Naive thymus-derived CD4-positive, alpha-beta T cell (primary cell): ENCODE measurements at regions of chr2 and their contacts with region 1.

Region 1: GRCh38 chr2:8681786-8682692 is at the start of gene ID2:
- DNase-seq: peak; percentile 96 to 99 (median 99)
- ATAC-seq: peak; percentile 83
- H3K4me3 ChIP-seq: peak within 1 kb of the TSS; percentile 89
- H3K4me3 Mint-ChIP-seq: peak within 1 kb of the TSS; percentile 89 to 100 (median 98)
- H3K27ac ChIP-seq: peak within 1 kb of the TSS; percentile 81
- H3K27ac Mint-ChIP-seq: peak within 1 kb of the TSS; percentile 89 to 97 (median 95)
- H3K4me1 ChIP-seq: peaks cover 10 to 24% of the 10 kb centered on the region in 2 donors
- H3K4me1 Mint-ChIP-seq: peaks cover 24 to 49% (median 43%) of the 10 kb centered on the region in 7 donors
- H3K27me3 ChIP-seq: peaks cover 0 to 18% of the 10 kb centered on the region in 2 donors
- H3K27me3 Mint-ChIP-seq: peaks cover 12 to 24% (median 20%) of the 10 kb centered on the region in 5 donors
- total RNA-seq, gene ID2: 43.0 to 185 (median 77.1) TPM

Region 2: DNA sequence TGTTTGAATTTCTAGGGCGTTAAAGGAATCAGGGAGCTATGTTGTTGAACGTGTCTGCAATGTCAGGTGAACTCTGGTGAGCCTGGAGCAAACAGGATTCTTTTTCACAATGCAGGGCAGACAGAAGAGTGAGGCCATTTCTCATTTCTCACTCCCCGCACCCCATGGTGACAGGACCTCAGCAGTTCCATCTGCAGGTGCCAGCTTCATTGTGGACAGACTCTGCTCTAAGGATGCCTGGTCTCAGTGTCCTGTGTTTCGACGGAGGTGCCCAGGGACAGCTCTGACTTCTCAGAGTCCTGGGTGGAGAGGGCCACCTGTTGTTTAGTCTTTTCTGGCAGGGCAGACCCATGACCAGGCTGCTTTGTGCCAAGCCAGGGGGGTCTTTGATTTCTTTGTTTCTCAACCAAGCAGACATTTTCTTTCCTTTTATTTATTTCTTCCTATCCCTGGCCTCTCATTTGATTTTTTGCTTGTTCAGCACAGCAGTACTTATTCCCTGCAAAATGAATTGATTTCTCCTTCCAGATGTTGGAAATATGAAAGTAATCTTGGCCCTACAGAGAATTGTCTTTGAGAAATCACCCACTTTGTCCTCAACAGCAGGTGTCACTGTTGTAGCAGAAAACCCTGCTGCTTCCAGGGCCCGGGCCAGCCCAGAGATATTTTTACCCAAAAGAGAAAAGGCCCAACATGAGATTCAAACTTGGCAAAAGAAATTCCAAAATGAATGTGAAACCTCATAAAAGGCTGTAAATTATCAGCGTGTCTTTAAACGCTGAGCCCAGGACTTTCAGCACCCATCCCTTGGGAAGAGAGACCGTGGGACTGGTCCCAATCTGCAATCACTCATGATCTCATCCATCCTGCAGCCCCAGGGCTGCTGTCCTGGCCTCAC is 1563.2 kb before region 1 on chr2:
- CTCF ChIA-PET with region 1: no interaction called
- POLR2A ChIA-PET with region 1: no interaction called
- intact Hi-C with region 1: loop called in 1 of 2 experiments (anchors 2 kb)
- DNase-seq: peak in 2 of 9 donors; percentile 10 to 24
- ATAC-seq: no peak
- H3K4me3 ChIP-seq: no peak overlapping the region
- H3K4me3 Mint-ChIP-seq: no peak overlapping the region
- H3K27ac ChIP-seq: no peak overlapping the region
- H3K27ac Mint-ChIP-seq: no peak overlapping the region
- H3K4me1 ChIP-seq: no peaks in the 10 kb centered on the region
- H3K4me1 Mint-ChIP-seq: no peaks in the 10 kb centered on the region
- H3K27me3 ChIP-seq: no peaks in the 10 kb centered on the region
- H3K27me3 Mint-ChIP-seq: peaks cover 0 to 4% (median 0%) of the 10 kb centered on the region in 5 donors

Region 3: GRCh38 chr2:7567646-7568045 is 1114.4 kb before region 1 on chr2:
- CTCF ChIA-PET with region 1: interaction called, 16 read pairs
- POLR2A ChIA-PET with region 1: interaction called, 33 read pairs
- intact Hi-C with region 1: loop called (anchors 1 kb)
- DNase-seq: peak; percentile 16 to 92 (median 79)
- ATAC-seq: peak; percentile 92
- H3K4me3 ChIP-seq: peak overlapping the region; percentile 14
- H3K4me3 Mint-ChIP-seq: peak overlapping the region; percentile 48 to 79 (median 72)
- H3K27ac ChIP-seq: peak overlapping the region; percentile 61
- H3K27ac Mint-ChIP-seq: peak overlapping the region; percentile 89 to 99 (median 96)
- H3K4me1 ChIP-seq: peaks cover 17 to 45% of the 10 kb centered on the region in 2 donors
- H3K4me1 Mint-ChIP-seq: peaks cover 30 to 72% (median 66%) of the 10 kb centered on the region in 7 donors
- H3K27me3 ChIP-seq: no peaks in the 10 kb centered on the region
- H3K27me3 Mint-ChIP-seq: no peaks in the 10 kb centered on the region

Region 4: DNA sequence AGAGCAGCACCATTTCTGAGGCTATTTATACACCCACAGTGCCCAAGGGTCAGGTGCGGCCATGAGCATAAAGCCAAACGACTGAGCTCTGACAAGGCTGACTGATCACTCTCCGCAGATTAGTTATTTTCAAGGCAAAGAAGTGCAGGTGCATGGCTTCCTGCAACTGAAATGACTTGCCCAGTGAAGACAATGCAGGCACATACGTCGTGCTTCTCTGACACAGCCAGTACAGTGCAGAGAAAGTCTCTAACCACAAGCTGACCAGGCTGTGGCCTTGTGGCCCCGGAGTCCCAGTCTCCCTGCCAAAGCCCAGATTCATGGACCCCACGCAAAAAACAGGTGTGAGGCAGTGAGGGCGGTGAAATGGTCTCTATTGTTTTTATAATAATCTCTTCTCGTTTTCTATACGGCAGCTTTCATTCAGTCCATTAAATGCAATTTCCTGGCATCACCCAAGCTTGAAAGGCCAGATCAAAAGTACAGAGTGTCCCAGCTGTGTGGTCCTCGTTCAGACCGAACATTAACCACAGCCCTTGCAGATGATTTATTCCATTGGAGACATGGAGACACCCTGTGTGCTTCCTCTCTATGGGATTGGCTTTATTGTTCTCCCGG is 447.2 kb before region 1 on chr2:
- CTCF ChIA-PET with region 1: no interaction called
- POLR2A ChIA-PET with region 1: no interaction called
- intact Hi-C with region 1: loop called in 1 of 2 experiments (anchors 10 kb)
- DNase-seq: no peak
- ATAC-seq: no peak
- H3K4me3 ChIP-seq: no peak overlapping the region
- H3K4me3 Mint-ChIP-seq: peak overlapping the region in 5 of 10 donors; percentile 17 to 47 (median 29)
- H3K27ac ChIP-seq: no peak overlapping the region
- H3K27ac Mint-ChIP-seq: no peak overlapping the region
- H3K4me1 ChIP-seq: peaks cover 0 to 2% of the 10 kb centered on the region in 2 donors
- H3K4me1 Mint-ChIP-seq: peaks cover 2 to 36% (median 10%) of the 10 kb centered on the region in 7 donors
- H3K27me3 ChIP-seq: no peaks in the 10 kb centered on the region
- H3K27me3 Mint-ChIP-seq: peaks cover 4 to 24% (median 9%) of the 10 kb centered on the region in 5 donors

Region 5: DNA sequence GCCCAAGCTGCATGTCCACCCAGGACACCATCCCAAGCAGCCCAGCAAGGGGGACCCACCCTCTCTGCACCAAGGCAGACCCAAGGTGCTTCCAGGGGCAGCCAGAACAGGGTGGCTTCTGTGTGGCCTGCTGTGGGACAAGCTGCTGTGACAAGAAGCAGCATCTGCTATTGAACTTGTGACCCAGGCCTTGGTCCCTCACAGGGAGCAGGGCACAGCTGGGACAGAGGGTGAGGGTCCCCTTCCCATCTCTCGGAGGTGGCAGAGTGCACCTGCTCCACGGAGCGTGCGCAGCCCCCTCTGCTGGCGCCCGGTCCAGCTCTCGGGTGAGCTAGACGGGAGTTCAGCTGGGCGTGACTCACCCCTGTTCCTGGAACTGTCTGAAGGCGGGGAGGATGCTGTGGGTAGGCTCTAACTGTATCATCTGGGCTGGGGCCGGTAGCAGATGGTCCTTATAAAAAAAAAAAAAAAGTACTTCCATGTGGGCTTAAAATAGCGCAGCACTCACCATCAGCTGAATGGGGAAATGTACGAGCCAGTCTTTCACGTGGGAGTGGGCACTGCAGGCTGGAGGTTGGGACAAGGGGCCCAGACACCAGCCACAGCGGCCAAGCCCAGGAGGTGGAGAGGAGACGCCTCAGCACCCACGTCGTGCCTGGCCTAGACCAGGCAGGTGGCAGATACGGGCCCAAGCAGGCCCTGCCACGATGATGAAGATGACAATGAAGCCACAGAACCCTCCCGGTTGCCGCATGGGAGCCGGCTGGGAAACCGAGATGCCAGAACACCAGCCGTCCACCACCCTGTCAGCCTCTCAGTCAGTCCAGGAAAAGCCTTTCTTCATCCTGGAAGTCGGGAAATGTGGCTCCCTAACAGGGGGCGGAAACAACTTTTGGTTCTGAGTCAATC is 137.0 kb before region 1 on chr2:
- CTCF ChIA-PET with region 1: no interaction called
- POLR2A ChIA-PET with region 1: no interaction called
- intact Hi-C with region 1: loop called in 1 of 2 experiments (anchors 1 kb)
- DNase-seq: peak in 8 of 9 donors; percentile 10 to 85 (median 32)
- ATAC-seq: peak; percentile 82
- H3K4me3 ChIP-seq: peak overlapping the region; percentile 17
- H3K4me3 Mint-ChIP-seq: peak overlapping the region in 7 of 10 donors; percentile 2 to 64 (median 23)
- H3K27ac ChIP-seq: no peak overlapping the region
- H3K27ac Mint-ChIP-seq: peak overlapping the region in 4 of 9 donors; percentile 43 to 97 (median 60)
- H3K4me1 ChIP-seq: peaks cover 10 to 57% of the 10 kb centered on the region in 2 donors
- H3K4me1 Mint-ChIP-seq: peaks cover 32 to 84% (median 42%) of the 10 kb centered on the region in 7 donors
- H3K27me3 ChIP-seq: no peaks in the 10 kb centered on the region
- H3K27me3 Mint-ChIP-seq: no peaks in the 10 kb centered on the region

Region 6: GRCh38 chr2:8650256-8650655 is 31.8 kb before region 1 on chr2:
- CTCF ChIA-PET with region 1: no interaction called
- POLR2A ChIA-PET with region 1: no interaction called
- intact Hi-C with region 1: no loop called
- DNase-seq: no peak
- ATAC-seq: no peak
- H3K4me3 ChIP-seq: no peak overlapping the region
- H3K4me3 Mint-ChIP-seq: no peak overlapping the region
- H3K27ac ChIP-seq: no peak overlapping the region
- H3K27ac Mint-ChIP-seq: no peak overlapping the region
- H3K4me1 ChIP-seq: no peaks in the 10 kb centered on the region
- H3K4me1 Mint-ChIP-seq: no peaks in the 10 kb centered on the region
- H3K27me3 ChIP-seq: no peaks in the 10 kb centered on the region
- H3K27me3 Mint-ChIP-seq: peaks cover 0 to 4% (median 0%) of the 10 kb centered on the region in 5 donors

Region 7: GRCh38 chr2:8662239-8662895 is 19.7 kb before region 1 on chr2:
- CTCF ChIA-PET with region 1: interaction called, 3 read pairs
- POLR2A ChIA-PET with region 1: interaction called, 7 read pairs
- intact Hi-C with region 1: loop called in 1 of 2 experiments (anchors 1 kb)
- DNase-seq: no peak
- ATAC-seq: no peak
- H3K4me3 ChIP-seq: no peak overlapping the region
- H3K4me3 Mint-ChIP-seq: peak overlapping the region in 1 of 10 donors; percentile 7
- H3K27ac ChIP-seq: no peak overlapping the region
- H3K27ac Mint-ChIP-seq: peak overlapping the region in 1 of 9 donors; percentile 40
- H3K4me1 ChIP-seq: peaks cover 3 to 13% of the 10 kb centered on the region in 2 donors
- H3K4me1 Mint-ChIP-seq: peaks cover 3 to 37% (median 21%) of the 10 kb centered on the region in 7 donors
- H3K27me3 ChIP-seq: no peaks in the 10 kb centered on the region
- H3K27me3 Mint-ChIP-seq: peaks cover 0 to 39% (median 11%) of the 10 kb centered on the region in 5 donors

Region 8: GRCh38 chr2:8729939-8730338 is 47.9 kb after region 1 on chr2:
- CTCF ChIA-PET with region 1: no interaction called
- POLR2A ChIA-PET with region 1: no interaction called
- intact Hi-C with region 1: no loop called
- DNase-seq: no peak
- ATAC-seq: no peak
- H3K4me3 ChIP-seq: no peak overlapping the region
- H3K4me3 Mint-ChIP-seq: no peak overlapping the region
- H3K27ac ChIP-seq: no peak overlapping the region
- H3K27ac Mint-ChIP-seq: peak overlapping the region in 1 of 9 donors; percentile 4
- H3K4me1 ChIP-seq: no peaks in the 10 kb centered on the region
- H3K4me1 Mint-ChIP-seq: no peaks in the 10 kb centered on the region
- H3K27me3 ChIP-seq: no peaks in the 10 kb centered on the region
- H3K27me3 Mint-ChIP-seq: no peaks in the 10 kb centered on the region

Region 9: GRCh38 chr2:10448208-10448645 is 1766.2 kb after region 1 on chr2 and contains the start of gene ODC1:
- CTCF ChIA-PET with region 1: no interaction called
- POLR2A ChIA-PET with region 1: no interaction called
- intact Hi-C with region 1: loop called in 1 of 2 experiments (anchors 5 kb)
- DNase-seq: peak; percentile 96 to 99 (median 97)
- ATAC-seq: peak; percentile 92
- H3K4me3 ChIP-seq: peak within 1 kb of the TSS; percentile 91
- H3K4me3 Mint-ChIP-seq: peak within 1 kb of the TSS; percentile 81 to 95 (median 86)
- H3K27ac ChIP-seq: peak within 1 kb of the TSS; percentile 88
- H3K27ac Mint-ChIP-seq: peak within 1 kb of the TSS; percentile 76 to 94 (median 89)
- H3K4me1 ChIP-seq: peaks cover 12 to 26% of the 10 kb centered on the region in 2 donors
- H3K4me1 Mint-ChIP-seq: peaks cover 7 to 47% (median 24%) of the 10 kb centered on the region in 7 donors
- H3K27me3 ChIP-seq: no peaks in the 10 kb centered on the region
- H3K27me3 Mint-ChIP-seq: no peaks in the 10 kb centered on the region
- total RNA-seq, gene ODC1: 32.7 to 88.2 (median 52.4) TPM